B cell (primary cell): ENCODE measurements at regions of chr3 and their contacts with region 1.

Region 1: GRCh38 chr3:52705688-52706686 is at the starts of genes GLT8D1 and SPCS1:
- DNase-seq: peak; percentile 97
- ATAC-seq: peak; percentile 86
- H3K4me3 ChIP-seq: peak within 1 kb of the TSS; percentile 75 to 91 (median 82)
- H3K4me3 Mint-ChIP-seq: peak within 1 kb of the TSS; percentile 96
- H3K27ac ChIP-seq: peak within 1 kb of the TSS; percentile 66 to 95
- H3K27ac Mint-ChIP-seq: peak within 1 kb of the TSS; percentile 97
- H3K4me1 ChIP-seq: peaks cover 40 to 44% of the 10 kb centered on the region in 2 donors
- H3K4me1 Mint-ChIP-seq: peaks cover 46% of the 10 kb centered on the region
- H3K27me3 ChIP-seq: no peaks in the 10 kb centered on the region
- H3K27me3 Mint-ChIP-seq: no peaks in the 10 kb centered on the region
- CTCF ChIP-seq: no peak
- total RNA-seq, gene GLT8D1: 28.7 and 32.5 TPM in 2 replicates
- total RNA-seq, gene SPCS1: 54.3 and 64.5 TPM in 2 replicates

Region 2: GRCh38 chr3:51974963-51975851 is 730.8 kb before region 1 on chr3 and contains the start of gene ABHD14A:
- CTCF ChIA-PET with region 1: no interaction called
- POLR2A ChIA-PET with region 1: no interaction called
- intact Hi-C with region 1: loop called (anchors 10 kb)
- DNase-seq: peak; percentile 85
- ATAC-seq: peak; percentile 78
- H3K4me3 ChIP-seq: peak within 1 kb of the TSS; percentile 71 to 98 (median 85)
- H3K4me3 Mint-ChIP-seq: peak within 1 kb of the TSS; percentile 100
- H3K27ac ChIP-seq: peak within 1 kb of the TSS; percentile 39 to 75
- H3K27ac Mint-ChIP-seq: peak within 1 kb of the TSS; percentile 95
- H3K4me1 ChIP-seq: peaks cover 14 to 23% of the 10 kb centered on the region in 2 donors
- H3K4me1 Mint-ChIP-seq: peaks cover 28% of the 10 kb centered on the region
- H3K27me3 ChIP-seq: no peaks in the 10 kb centered on the region
- H3K27me3 Mint-ChIP-seq: no peaks in the 10 kb centered on the region
- CTCF ChIP-seq: no peak
- total RNA-seq, gene ABHD14A: 11.9 and 14.0 TPM in 2 replicates

Region 3: GRCh38 chr3:52561028-52561747 is 144.8 kb before region 1 on chr3:
- CTCF ChIA-PET with region 1: no interaction called
- POLR2A ChIA-PET with region 1: interaction called, 11 read pairs
- intact Hi-C with region 1: no loop called
- DNase-seq: no peak
- ATAC-seq: no peak
- H3K4me3 ChIP-seq: no peak overlapping the region
- H3K4me3 Mint-ChIP-seq: no peak overlapping the region
- H3K27ac ChIP-seq: no peak overlapping the region
- H3K27ac Mint-ChIP-seq: no peak overlapping the region
- H3K4me1 ChIP-seq: no peaks in the 10 kb centered on the region
- H3K4me1 Mint-ChIP-seq: no peaks in the 10 kb centered on the region
- H3K27me3 ChIP-seq: no peaks in the 10 kb centered on the region
- H3K27me3 Mint-ChIP-seq: no peaks in the 10 kb centered on the region
- CTCF ChIP-seq: no peak

Region 4: DNA sequence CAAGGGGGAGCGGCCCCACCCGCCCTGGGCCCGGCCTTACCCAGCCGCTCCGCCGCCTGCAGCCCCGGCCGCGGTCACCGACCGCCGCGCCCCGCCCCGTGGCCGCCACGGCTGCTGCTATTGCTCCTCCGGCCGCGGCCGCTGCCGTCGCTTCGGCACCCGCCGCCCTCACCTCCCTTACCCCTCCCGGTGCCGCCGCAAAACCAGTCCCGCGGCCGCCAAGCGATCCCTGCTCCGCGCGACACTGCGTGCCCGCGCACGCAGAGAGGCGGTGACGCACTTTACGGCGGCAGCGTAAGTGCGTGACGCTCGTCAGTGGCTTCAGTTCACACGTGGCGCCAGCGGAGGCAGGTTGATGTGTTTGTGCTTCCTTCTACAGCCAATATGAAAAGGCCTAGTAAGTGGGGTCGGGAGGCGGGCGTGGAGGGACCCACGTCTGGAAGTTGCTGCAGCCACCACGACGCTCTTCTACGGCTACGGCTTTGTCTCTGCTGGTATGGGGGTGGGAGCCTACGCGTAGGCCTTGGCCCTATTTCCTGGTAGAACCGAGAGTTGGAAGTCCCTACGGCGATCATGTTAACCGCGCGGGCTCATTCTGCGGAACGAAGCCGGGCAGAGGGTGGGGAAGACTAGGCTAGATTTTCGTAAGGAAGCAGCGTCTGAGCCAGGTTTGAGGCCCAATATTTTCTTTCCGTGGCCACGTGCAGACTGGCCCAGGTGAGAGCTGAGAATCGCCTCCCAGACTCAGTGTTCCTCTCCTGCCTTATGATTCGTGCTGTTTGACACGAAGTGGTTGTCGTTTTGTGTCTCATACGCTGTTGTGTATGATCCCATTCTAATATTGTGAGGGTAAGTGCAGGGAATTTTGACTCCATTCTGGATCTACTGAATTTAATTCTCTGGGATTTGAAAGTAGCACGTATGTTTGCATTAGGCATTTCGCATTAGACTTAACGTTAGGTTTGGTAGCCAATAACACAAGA is 20.0 kb before region 1 on chr3 and contains the starts of genes GNL3 and PBRM1:
- CTCF ChIA-PET with region 1: no interaction called
- POLR2A ChIA-PET with region 1: interaction called, 9 read pairs
- intact Hi-C with region 1: loop called (anchors 1 kb)
- DNase-seq: peak; percentile 98
- ATAC-seq: peak; percentile 86
- H3K4me3 ChIP-seq: peak within 1 kb of the TSS; percentile 67 to 90 (median 86)
- H3K4me3 Mint-ChIP-seq: peak within 1 kb of the TSS; percentile 99
- H3K27ac ChIP-seq: peak within 1 kb of the TSS; percentile 92 to 97
- H3K27ac Mint-ChIP-seq: peak within 1 kb of the TSS; percentile 100
- H3K4me1 ChIP-seq: peaks cover 20 to 21% of the 10 kb centered on the region in 2 donors
- H3K4me1 Mint-ChIP-seq: peaks cover 36% of the 10 kb centered on the region
- H3K27me3 ChIP-seq: no peaks in the 10 kb centered on the region
- H3K27me3 Mint-ChIP-seq: no peaks in the 10 kb centered on the region
- CTCF ChIP-seq: no peak
- total RNA-seq, gene GNL3: 67.3 and 68.5 TPM in 2 replicates
- total RNA-seq, gene PBRM1: 81.1 and 85.9 TPM in 2 replicates

Region 5: DNA sequence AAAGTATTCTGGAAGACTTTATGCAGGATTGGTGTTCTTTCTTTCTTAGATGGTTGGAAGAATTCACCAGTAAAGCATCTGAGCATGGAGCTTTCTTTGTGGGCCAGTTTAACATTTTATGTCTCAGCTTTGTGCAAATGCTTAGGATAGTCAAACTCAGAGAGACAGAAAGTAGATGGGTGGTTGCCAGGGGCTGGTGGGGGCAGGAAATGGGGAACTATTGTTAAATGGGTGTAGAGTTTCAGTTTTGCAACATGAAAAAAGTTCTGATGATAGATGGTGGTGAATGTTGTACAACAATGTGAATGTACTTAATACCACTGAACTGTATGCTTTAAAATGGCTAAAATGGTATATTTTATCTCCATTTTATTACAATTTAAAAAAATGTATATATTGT is 24.7 kb after region 1 on chr3:
- CTCF ChIA-PET with region 1: no interaction called
- POLR2A ChIA-PET with region 1: no interaction called
- intact Hi-C with region 1: no loop called
- DNase-seq: no peak
- ATAC-seq: no peak
- H3K4me3 ChIP-seq: no peak overlapping the region
- H3K4me3 Mint-ChIP-seq: no peak overlapping the region
- H3K27ac ChIP-seq: no peak overlapping the region
- H3K27ac Mint-ChIP-seq: no peak overlapping the region
- H3K4me1 ChIP-seq: no peaks in the 10 kb centered on the region
- H3K4me1 Mint-ChIP-seq: peaks cover 4% of the 10 kb centered on the region
- H3K27me3 ChIP-seq: no peaks in the 10 kb centered on the region
- H3K27me3 Mint-ChIP-seq: no peaks in the 10 kb centered on the region
- CTCF ChIP-seq: no peak

Region 6: DNA sequence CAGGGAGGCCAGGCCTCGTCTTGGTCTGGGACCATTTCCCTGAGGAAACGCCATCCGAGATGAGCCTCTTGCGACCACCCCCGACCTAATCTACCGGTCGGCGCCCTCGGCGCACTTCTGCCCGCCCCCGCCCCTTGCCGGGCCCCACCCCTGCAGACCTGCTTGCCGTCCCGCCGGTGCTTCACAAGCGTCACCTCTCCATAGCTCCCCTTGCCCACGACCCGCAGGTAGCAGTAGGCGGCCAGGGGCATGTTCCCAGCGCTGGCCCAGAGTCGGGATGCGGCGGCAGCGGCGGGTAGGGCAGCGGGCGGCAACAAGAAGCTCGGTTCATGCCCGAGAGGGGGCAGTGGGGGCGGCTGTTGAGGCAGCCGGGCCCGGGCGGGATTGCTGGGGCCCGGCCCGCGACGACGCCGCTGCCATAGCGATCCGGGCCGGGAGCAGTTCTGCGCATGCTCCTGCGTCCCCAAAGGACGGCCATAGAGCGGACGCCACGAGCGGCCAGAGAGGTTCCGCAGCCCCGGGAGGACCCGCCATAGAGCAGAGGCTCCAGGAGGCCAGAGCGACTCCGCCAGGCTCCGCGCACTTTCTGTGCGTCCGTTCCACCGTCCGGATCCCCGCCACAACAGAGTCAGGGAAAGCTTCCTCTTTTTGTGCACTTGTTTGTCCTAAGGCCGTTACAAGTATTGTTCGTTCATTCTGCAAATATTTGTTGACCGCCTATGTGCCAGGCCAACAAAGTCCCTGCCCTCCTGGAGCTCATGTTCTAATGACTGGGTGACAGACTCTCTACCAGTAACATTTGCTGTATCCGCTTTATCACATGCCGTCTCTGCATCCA is 64.7 kb after region 1 on chr3 and contains the start of gene NEK4:
- CTCF ChIA-PET with region 1: no interaction called
- POLR2A ChIA-PET with region 1: interaction called, 3 read pairs
- intact Hi-C with region 1: loop called (anchors 2 kb)
- DNase-seq: peak; percentile 93
- ATAC-seq: peak; percentile 96
- H3K4me3 ChIP-seq: peak within 1 kb of the TSS; percentile 57 to 85 (median 70)
- H3K4me3 Mint-ChIP-seq: peak within 1 kb of the TSS; percentile 99
- H3K27ac ChIP-seq: peak within 1 kb of the TSS; percentile 71 to 89
- H3K27ac Mint-ChIP-seq: peak within 1 kb of the TSS; percentile 98
- H3K4me1 ChIP-seq: peaks cover 9 to 12% of the 10 kb centered on the region in 2 donors
- H3K4me1 Mint-ChIP-seq: peaks cover 18% of the 10 kb centered on the region
- H3K27me3 ChIP-seq: no peaks in the 10 kb centered on the region
- H3K27me3 Mint-ChIP-seq: no peaks in the 10 kb centered on the region
- CTCF ChIP-seq: peak; percentile 27
- total RNA-seq, gene NEK4: 33.8 and 38.4 TPM in 2 replicates

Region 7: GRCh38 chr3:53347261-53348064 is 641.5 kb after region 1 on chr3 and contains the start of gene DCP1A:
- CTCF ChIA-PET with region 1: no interaction called
- POLR2A ChIA-PET with region 1: no interaction called
- intact Hi-C with region 1: loop called (anchors 5 kb)
- DNase-seq: peak; percentile 97
- ATAC-seq: peak; percentile 93
- H3K4me3 ChIP-seq: peak within 1 kb of the TSS; percentile 86 to 99 (median 96)
- H3K4me3 Mint-ChIP-seq: peak within 1 kb of the TSS; percentile 100
- H3K27ac ChIP-seq: peak within 1 kb of the TSS; percentile 89 to 95
- H3K27ac Mint-ChIP-seq: peak within 1 kb of the TSS; percentile 99
- H3K4me1 ChIP-seq: peaks cover 11 to 15% of the 10 kb centered on the region in 2 donors
- H3K4me1 Mint-ChIP-seq: peaks cover 23% of the 10 kb centered on the region
- H3K27me3 ChIP-seq: no peaks in the 10 kb centered on the region
- H3K27me3 Mint-ChIP-seq: no peaks in the 10 kb centered on the region
- CTCF ChIP-seq: no peak
- total RNA-seq, gene DCP1A: 44.6 and 47.7 TPM in 2 replicates

Region 8: DNA sequence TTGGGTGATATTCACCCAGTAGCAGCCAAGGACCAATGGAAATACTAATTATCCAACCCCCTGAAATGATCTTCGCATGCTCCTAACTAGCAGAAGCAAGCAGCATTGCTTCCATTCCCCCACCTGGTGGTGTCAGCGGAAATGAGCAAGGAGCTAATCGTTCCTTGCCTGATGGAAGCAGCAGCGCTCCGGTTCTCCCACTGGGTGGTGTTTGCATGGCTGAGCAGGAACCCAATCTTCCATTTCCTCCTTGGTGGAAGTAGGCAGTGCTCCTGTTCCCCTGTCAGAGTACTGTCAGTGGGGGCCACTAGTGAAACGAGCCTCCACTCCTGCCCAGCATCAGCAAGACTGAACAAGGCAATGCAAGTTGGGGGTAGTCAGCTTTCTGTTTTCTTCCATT is 1727.9 kb after region 1 on chr3:
- CTCF ChIA-PET with region 1: no interaction called
- POLR2A ChIA-PET with region 1: no interaction called
- intact Hi-C with region 1: no loop called
- DNase-seq: no peak
- ATAC-seq: no peak
- H3K4me3 ChIP-seq: no peak overlapping the region
- H3K4me3 Mint-ChIP-seq: no peak overlapping the region
- H3K27ac ChIP-seq: no peak overlapping the region
- H3K27ac Mint-ChIP-seq: no peak overlapping the region
- H3K4me1 ChIP-seq: no peaks in the 10 kb centered on the region
- H3K4me1 Mint-ChIP-seq: no peaks in the 10 kb centered on the region
- H3K27me3 ChIP-seq: no peaks in the 10 kb centered on the region
- H3K27me3 Mint-ChIP-seq: no peaks in the 10 kb centered on the region
- CTCF ChIP-seq: no peak